GM12878 (cell line): ENCODE measurements at regions of chr15 and their contacts with region 1.

Region 1: DNA sequence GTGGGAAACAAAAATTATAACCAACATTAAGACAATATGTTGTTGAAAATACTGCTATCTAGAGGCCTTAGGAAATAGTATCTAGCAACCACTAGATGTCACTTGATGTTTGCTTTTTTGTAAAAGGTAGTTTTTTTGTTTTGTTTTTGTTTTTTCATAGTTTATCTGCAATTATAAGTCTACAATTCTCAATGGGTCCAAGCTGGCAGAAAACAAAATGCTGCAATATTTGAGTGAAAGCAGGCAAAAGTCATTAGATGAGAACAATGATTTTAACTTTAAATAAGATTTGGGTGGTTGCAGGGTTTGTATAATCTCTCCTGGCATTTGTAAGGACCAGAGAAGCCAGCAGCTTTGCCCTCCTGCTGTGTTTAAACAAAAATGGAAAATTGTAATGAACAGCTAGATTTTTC is 27.0 kb downstream of the DUT start:
- DNase-seq: no peak
- ATAC-seq: peak; percentile 70
- H3K4me3 ChIP-seq: peak overlapping the region; percentile 22
- H3K27ac ChIP-seq: peak overlapping the region; percentile 53
- H3K4me1 ChIP-seq: peaks cover 10% of the 10 kb centered on the region
- H3K27me3 ChIP-seq: no peaks in the 10 kb centered on the region
- CTCF ChIP-seq: peak; percentile 44 to 73 (median 64); a peak in 5 of 6 replicates
- EP300 ChIP-seq: no peak
- POLR2A ChIP-seq: no peak
- RAD21 ChIP-seq: peak; percentile 78

Region 2: GRCh38 chr15:48370460-48370859 is 12.2 kb after region 1 on chr15:
- CTCF ChIA-PET with region 1: interaction called, 15 read pairs
- POLR2A ChIA-PET with region 1: no interaction called
- RAD21 ChIA-PET with region 1: interaction called, 15 read pairs
- SMC1A ChIA-PET with region 1: interaction called, 6 read pairs
- in situ Hi-C with region 1: no loop called
- intact Hi-C with region 1: no loop called
- DNase-seq: no peak
- ATAC-seq: no peak
- H3K4me3 ChIP-seq: no peak overlapping the region
- H3K27ac ChIP-seq: no peak overlapping the region
- H3K4me1 ChIP-seq: no peaks in the 10 kb centered on the region
- H3K27me3 ChIP-seq: no peaks in the 10 kb centered on the region
- CTCF ChIP-seq: no peak
- EP300 ChIP-seq: no peak
- POLR2A ChIP-seq: no peak
- RAD21 ChIP-seq: no peak

Region 3: DNA sequence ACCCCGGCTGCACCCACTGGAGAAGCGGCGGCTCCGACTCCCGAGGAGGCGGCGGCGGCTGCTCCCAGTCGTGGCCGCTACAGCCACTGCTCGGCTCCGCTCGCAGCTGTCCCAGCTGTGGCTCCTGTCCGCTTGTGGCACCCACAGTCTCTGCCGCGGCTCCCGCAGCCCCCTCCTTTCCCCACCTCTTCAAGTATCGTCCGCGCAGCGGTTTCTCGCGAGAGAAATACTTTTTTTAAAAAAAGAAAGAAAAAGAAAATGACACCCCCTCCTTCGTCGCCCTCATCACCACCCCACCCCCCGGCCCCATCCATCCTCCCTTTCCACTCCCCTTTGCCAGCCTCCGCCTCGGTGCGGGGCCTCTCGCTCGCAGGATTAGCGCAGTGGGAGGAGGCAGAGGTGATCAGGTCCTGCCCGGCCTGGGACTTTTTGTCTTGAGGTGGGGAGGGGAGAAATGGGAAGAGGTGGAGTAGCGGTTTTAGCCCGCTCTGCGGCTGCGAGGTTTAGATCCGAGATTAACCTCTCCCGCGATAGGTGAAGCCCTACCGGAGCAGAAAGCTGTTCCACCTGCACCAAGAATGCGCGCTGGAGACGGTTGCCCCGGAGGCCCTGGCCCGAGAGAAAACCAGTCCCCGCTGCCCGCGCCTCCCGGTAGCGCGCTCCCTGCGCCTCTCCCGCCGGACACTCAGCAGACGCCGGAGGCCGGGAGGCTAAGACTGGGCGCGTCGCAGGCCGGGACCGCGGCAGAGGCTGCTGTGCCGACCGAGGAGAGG is 287.5 kb after region 1 on chr15 and contains the start of gene FBN1:
- CTCF ChIA-PET with region 1: interaction called, 88 read pairs
- POLR2A ChIA-PET with region 1: interaction called, 4 read pairs
- RAD21 ChIA-PET with region 1: interaction called, 46 read pairs
- SMC1A ChIA-PET with region 1: interaction called, 58 read pairs
- in situ Hi-C with region 1: no loop called
- intact Hi-C with region 1: loop called (anchors 2 kb)
- DNase-seq: peak; percentile 33
- ATAC-seq: peak; percentile 80
- H3K4me3 ChIP-seq: peak within 1 kb of the TSS; percentile 79
- H3K27ac ChIP-seq: peak within 1 kb of the TSS; percentile 56
- H3K4me1 ChIP-seq: peaks cover 8% of the 10 kb centered on the region; the same call in 1 of the 2 replicates
- H3K27me3 ChIP-seq: no peaks in the 10 kb centered on the region
- CTCF ChIP-seq: no peak
- EP300 ChIP-seq: no peak
- POLR2A ChIP-seq: peak; percentile 89
- RAD21 ChIP-seq: no peak
- polyA plus RNA-seq, gene FBN1: 2.2 to 2.6 TPM

Region 4: DNA sequence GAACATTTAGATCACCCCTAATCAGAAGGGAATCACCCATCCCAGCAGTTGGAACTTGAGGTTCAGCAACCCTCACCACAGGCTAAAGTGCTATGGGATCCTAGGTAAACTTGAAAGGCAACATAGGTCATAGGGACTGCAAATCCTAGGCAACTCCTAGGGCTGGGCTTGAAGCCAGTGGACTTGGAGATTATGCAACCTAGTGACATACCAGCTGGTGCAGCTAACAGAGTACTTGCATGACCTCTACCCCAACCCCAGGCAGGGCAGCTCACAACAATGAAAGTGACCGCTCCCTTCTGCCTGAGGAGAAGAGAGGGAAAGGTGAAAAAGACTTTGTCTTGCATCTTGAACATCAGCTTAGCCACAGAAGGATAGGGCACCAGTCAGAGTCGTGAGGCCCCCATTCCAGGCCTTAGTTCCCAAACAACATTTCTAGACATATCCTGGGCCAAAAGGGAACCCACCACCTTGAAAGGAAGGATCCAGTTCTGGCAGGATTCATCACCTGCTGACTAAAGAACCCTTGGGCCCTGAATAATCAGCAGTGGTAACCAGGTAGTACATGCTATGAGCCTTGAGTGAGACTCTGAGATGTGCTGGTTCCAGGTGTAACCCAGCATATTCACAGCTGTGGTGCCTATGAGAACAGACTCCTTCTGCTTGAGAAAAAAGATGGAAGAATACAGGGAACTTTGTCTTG is 324.9 kb after region 1 on chr15:
- CTCF ChIA-PET with region 1: no interaction called
- POLR2A ChIA-PET with region 1: no interaction called
- RAD21 ChIA-PET with region 1: no interaction called
- SMC1A ChIA-PET with region 1: no interaction called
- in situ Hi-C with region 1: no loop called
- intact Hi-C with region 1: no loop called
- DNase-seq: no peak
- ATAC-seq: no peak
- H3K4me3 ChIP-seq: no peak overlapping the region
- H3K27ac ChIP-seq: no peak overlapping the region
- H3K4me1 ChIP-seq: no peaks in the 10 kb centered on the region
- H3K27me3 ChIP-seq: no peaks in the 10 kb centered on the region
- CTCF ChIP-seq: no peak
- EP300 ChIP-seq: no peak
- POLR2A ChIP-seq: no peak
- RAD21 ChIP-seq: no peak

Region 5: GRCh38 chr15:48855501-48856440 is 497.5 kb after region 1 on chr15:
- CTCF ChIA-PET with region 1: interaction called, 44 read pairs
- POLR2A ChIA-PET with region 1: no interaction called
- RAD21 ChIA-PET with region 1: interaction called, 11 read pairs
- SMC1A ChIA-PET with region 1: interaction called, 11 read pairs
- in situ Hi-C with region 1: no loop called
- intact Hi-C with region 1: no loop called
- DNase-seq: no peak
- ATAC-seq: no peak
- H3K4me3 ChIP-seq: no peak overlapping the region
- H3K27ac ChIP-seq: no peak overlapping the region
- H3K4me1 ChIP-seq: no peaks in the 10 kb centered on the region
- H3K27me3 ChIP-seq: no peaks in the 10 kb centered on the region
- CTCF ChIP-seq: peak in 1 of 3 experiments; percentile 25; a peak in 2 of 6 replicates
- EP300 ChIP-seq: no peak
- POLR2A ChIP-seq: no peak
- RAD21 ChIP-seq: 0 out of 2 replicates have a peak, but pooled peaks have one; percentile 10

Region 6: GRCh38 chr15:48975472-48976419 is 617.5 kb after region 1 on chr15:
- CTCF ChIA-PET with region 1: interaction called, 3 read pairs
- POLR2A ChIA-PET with region 1: no interaction called
- RAD21 ChIA-PET with region 1: interaction called, 10 read pairs
- SMC1A ChIA-PET with region 1: interaction called, 4 read pairs
- in situ Hi-C with region 1: no loop called
- intact Hi-C with region 1: no loop called
- DNase-seq: no peak
- ATAC-seq: peak; percentile 99
- H3K4me3 ChIP-seq: peak overlapping the region; percentile 52; the same call in 1 of the 2 replicates
- H3K27ac ChIP-seq: no peak overlapping the region
- H3K4me1 ChIP-seq: no peaks in the 10 kb centered on the region
- H3K27me3 ChIP-seq: no peaks in the 10 kb centered on the region
- CTCF ChIP-seq: peak; percentile 74 to 93 (median 76)
- EP300 ChIP-seq: no peak
- POLR2A ChIP-seq: peak; percentile 23; the same call in 1 of the 2 replicates
- RAD21 ChIP-seq: peak; percentile 54